ENCODE measurements at regions of chr10 and their contacts with region 1.

Region 1: DNA sequence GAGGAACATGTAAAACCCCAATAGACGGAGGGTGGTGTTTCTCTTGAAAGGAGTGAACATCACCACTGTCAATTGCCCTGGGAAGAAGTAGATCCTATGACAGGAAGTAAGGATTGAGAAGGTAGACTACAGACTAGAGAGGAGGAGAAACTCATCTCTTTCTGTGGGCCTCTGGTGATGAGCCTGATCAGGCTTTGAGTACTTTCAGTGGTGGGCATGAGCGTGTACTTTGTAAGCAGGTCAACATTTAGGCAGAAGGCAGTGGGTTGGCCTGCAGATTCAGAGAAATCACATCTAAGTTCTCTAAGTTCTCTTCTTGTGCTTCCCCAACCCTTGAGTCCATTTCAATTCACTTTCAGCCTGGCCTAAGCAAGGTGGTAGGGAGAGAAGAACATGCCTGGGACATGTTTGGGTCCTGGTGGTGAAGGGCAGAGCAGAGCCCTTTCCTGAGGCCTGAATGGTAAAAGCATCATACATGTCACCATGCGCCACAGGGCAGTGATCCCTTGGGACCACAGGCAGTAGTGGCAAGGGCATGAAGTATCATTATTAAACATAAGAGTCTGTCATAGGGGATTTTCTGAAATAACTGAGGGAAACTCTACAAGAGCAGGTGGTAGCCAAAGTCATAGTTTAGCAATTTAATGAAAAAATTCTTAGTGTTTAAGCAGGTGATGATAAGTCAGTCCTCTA is 56.4 kb upstream of the ANKRD1 start:
- DNase-seq: peak; percentile 76
- ATAC-seq: peak; percentile 91
- H3K4me3 ChIP-seq: no peak overlapping the region
- H3K27ac ChIP-seq: peak overlapping the region; percentile 74
- H3K4me1 ChIP-seq: peaks cover 10% of the 10 kb centered on the region
- H3K27me3 ChIP-seq: no peaks in the 10 kb centered on the region
- CTCF ChIP-seq: no peak
- EP300 ChIP-seq: no peak
- POLR2A ChIP-seq: no peak
- RAD21 ChIP-seq: no peak

Region 2: DNA sequence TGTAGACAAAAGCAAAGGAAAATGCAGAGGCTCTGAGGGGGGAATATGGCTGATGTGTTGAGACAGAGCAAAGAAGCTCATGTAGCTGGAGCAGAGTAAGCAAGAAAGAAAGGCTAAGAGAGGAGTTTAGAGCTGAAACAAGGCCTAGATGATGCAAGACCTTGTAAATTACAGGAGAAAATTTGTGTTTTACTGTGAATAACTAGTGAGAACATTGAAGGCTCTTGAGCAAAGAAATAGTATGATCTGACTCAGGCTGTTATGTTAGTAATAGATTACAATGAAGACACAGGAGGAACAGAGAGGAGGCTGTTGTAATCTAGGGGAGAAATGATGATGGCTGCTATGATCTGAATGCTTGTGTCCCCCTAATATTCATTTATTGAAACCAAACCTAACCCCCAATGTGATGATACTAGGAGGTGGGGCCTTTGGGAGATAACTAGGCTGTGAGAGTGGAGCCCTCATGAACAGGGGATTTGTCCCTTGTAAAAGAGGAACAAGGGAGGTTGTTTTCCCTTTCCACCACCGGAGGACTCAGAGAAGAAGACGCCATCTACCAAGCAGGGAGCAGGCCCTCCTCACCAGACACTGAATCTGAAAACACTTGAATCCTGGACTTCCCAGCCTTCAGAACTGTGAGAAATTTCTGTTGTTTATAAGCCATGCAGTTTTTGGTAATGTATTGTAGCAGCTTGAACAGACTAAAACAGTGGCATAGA is 514.4 kb before region 1 on chr10:
- CTCF ChIA-PET with region 1: no interaction called
- POLR2A ChIA-PET with region 1: no interaction called
- RAD21 ChIA-PET with region 1: no interaction called
- SMC1A ChIA-PET with region 1: no interaction called
- in situ Hi-C with region 1: no loop called
- intact Hi-C with region 1: no loop called
- DNase-seq: no peak
- ATAC-seq: no peak
- H3K4me3 ChIP-seq: no peak overlapping the region
- H3K27ac ChIP-seq: no peak overlapping the region
- H3K4me1 ChIP-seq: no peaks in the 10 kb centered on the region
- H3K27me3 ChIP-seq: no peaks in the 10 kb centered on the region; a peak in 1 of 4 replicates
- CTCF ChIP-seq: no peak
- EP300 ChIP-seq: no peak
- POLR2A ChIP-seq: no peak
- RAD21 ChIP-seq: no peak

Region 3: GRCh38 chr10:90993340-90993739 is 16.0 kb after region 1 on chr10:
- CTCF ChIA-PET with region 1: interaction called, 8 read pairs
- POLR2A ChIA-PET with region 1: interaction called, 6 read pairs
- RAD21 ChIA-PET with region 1: interaction called, 4 read pairs
- SMC1A ChIA-PET with region 1: interaction called, 36 read pairs
- in situ Hi-C with region 1: no loop called
- intact Hi-C with region 1: no loop called
- DNase-seq: no peak
- ATAC-seq: peak; percentile 50
- H3K4me3 ChIP-seq: peak overlapping the region; percentile 66
- H3K27ac ChIP-seq: peak overlapping the region; percentile 88
- H3K4me1 ChIP-seq: peaks cover 20% of the 10 kb centered on the region
- H3K27me3 ChIP-seq: no peaks in the 10 kb centered on the region
- CTCF ChIP-seq: no peak
- EP300 ChIP-seq: peak; percentile 41 to 86; a peak in 2 of 4 replicates
- POLR2A ChIP-seq: no peak
- RAD21 ChIP-seq: no peak

Region 4: GRCh38 chr10:90999512-91000172 is 22.3 kb after region 1 on chr10:
- CTCF ChIA-PET with region 1: interaction called, 5 read pairs
- POLR2A ChIA-PET with region 1: interaction called, 6 read pairs
- RAD21 ChIA-PET with region 1: interaction called, 8 read pairs
- SMC1A ChIA-PET with region 1: interaction called, 26 read pairs
- in situ Hi-C with region 1: no loop called
- intact Hi-C with region 1: no loop called
- DNase-seq: peak; percentile 54
- ATAC-seq: peak; percentile 69
- H3K4me3 ChIP-seq: no peak overlapping the region
- H3K27ac ChIP-seq: peak overlapping the region; percentile 87
- H3K4me1 ChIP-seq: peaks cover 33% of the 10 kb centered on the region
- H3K27me3 ChIP-seq: no peaks in the 10 kb centered on the region
- CTCF ChIP-seq: no peak
- EP300 ChIP-seq: peak; percentile 31 to 80; a peak in 2 of 4 replicates
- POLR2A ChIP-seq: no peak
- RAD21 ChIP-seq: no peak

Region 5: GRCh38 chr10:91077549-91078071 is 100.3 kb after region 1 on chr10:
- CTCF ChIA-PET with region 1: no interaction called
- POLR2A ChIA-PET with region 1: no interaction called
- RAD21 ChIA-PET with region 1: no interaction called
- SMC1A ChIA-PET with region 1: no interaction called
- in situ Hi-C with region 1: no loop called
- intact Hi-C with region 1: no loop called
- DNase-seq: no peak
- ATAC-seq: no peak
- H3K4me3 ChIP-seq: no peak overlapping the region
- H3K27ac ChIP-seq: no peak overlapping the region
- H3K4me1 ChIP-seq: no peaks in the 10 kb centered on the region
- H3K27me3 ChIP-seq: no peaks in the 10 kb centered on the region
- CTCF ChIP-seq: no peak
- EP300 ChIP-seq: no peak
- POLR2A ChIP-seq: no peak
- RAD21 ChIP-seq: no peak